Vagina (tissue), 2 donors: ENCODE measurements at regions of chr4 and their contacts with region 1.

Region 1: GRCh38 chr4:66229885-66230284 is 559.6 kb upstream of the EPHA5 start:
- DNase-seq: no peak
- H3K4me3 ChIP-seq: no peak overlapping the region
- H3K27ac ChIP-seq: no peak overlapping the region
- H3K4me1 ChIP-seq: no peaks in the 10 kb centered on the region
- H3K27me3 ChIP-seq: no peaks in the 10 kb centered on the region
- CTCF ChIP-seq: no peak
- POLR2A ChIP-seq: no peak

Region 2: DNA sequence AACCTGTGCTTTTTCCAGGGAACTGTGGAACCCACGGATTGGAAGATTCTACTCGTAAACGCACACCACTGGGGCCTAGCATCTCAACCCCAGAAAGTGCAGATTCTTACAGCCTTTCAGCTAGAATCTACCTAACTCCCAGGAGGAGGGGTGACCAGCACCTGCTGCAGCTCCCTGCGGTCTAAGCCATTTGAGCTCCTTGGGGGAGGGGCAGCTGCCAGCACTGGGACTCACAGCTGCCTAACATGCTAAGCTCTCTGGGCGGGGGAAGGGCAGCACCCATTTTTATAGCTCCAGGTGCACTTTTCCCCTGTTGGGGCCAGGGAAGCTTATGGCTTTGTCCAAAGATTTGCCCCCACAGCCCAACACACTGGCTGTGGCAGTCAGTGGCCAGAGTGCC is 36.1 kb after region 1 on chr4:
- intact Hi-C with region 1: loop called (anchors 2 kb)
- DNase-seq: no peak
- H3K4me3 ChIP-seq: no peak overlapping the region
- H3K27ac ChIP-seq: no peak overlapping the region
- H3K4me1 ChIP-seq: no peaks in the 10 kb centered on the region
- H3K27me3 ChIP-seq: no peaks in the 10 kb centered on the region
- CTCF ChIP-seq: no peak
- POLR2A ChIP-seq: no peak

Region 3: GRCh38 chr4:67035501-67035900 is 805.6 kb after region 1 on chr4:
- intact Hi-C with region 1: no loop called
- DNase-seq: no peak
- H3K4me3 ChIP-seq: no peak overlapping the region
- H3K27ac ChIP-seq: no peak overlapping the region
- H3K4me1 ChIP-seq: no peaks in the 10 kb centered on the region
- H3K27me3 ChIP-seq: no peaks in the 10 kb centered on the region
- CTCF ChIP-seq: no peak
- POLR2A ChIP-seq: no peak